A673 (cell line): ENCODE measurements at regions of chr9 and their contacts with region 1.

Region 1: DNA sequence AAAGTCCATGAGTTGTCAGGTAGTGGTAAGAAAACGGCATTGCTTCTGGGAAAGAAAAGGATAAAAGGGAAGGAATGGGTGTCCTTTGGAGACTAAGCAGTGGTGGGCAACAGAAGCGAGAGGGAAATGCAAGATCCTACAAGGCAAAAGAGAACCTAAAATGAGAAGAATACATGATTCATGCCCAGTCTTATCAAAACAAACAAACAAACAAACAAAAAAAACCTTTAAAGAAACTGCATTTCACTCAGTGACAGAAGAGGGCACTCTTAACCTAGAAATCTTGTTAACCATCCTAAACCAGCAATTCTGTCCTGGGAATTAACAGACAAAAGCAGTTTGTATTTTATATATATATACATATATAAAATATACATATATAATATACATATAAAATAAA is 88.5 kb downstream of the SUSD1 start:
- DNase-seq: peak; percentile 32
- H3K4me3 ChIP-seq: no peak overlapping the region
- H3K27ac ChIP-seq: no peak overlapping the region
- H3K4me1 ChIP-seq: no peaks in the 10 kb centered on the region
- H3K27me3 ChIP-seq: no peaks in the 10 kb centered on the region
- CTCF ChIP-seq: peak; percentile 73

Region 2: DNA sequence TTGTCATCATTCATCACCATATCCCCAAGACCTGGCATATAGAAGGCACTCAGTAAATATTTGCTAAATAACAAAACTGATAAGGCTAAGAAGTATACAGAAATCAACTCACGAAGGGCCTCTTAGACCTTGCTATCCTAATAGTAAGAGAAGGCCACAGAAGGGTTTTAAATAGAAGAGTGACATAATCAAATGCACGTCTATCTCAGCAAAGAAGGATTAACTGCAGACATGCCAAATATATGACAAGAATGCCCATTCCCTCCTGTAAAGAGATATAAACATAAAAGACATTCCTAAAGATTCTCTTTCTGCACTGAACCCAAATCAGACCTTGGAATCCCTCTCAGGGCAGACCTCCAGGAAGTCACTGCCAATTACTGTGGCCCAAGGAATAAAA is 636.5 kb before region 1 on chr9:
- CTCF ChIA-PET with region 1: no interaction called
- POLR2A ChIA-PET with region 1: no interaction called
- intact Hi-C with region 1: no loop called
- DNase-seq: no peak
- H3K4me3 ChIP-seq: no peak overlapping the region
- H3K27ac ChIP-seq: no peak overlapping the region
- H3K4me1 ChIP-seq: peaks cover 10% of the 10 kb centered on the region
- H3K27me3 ChIP-seq: no peaks in the 10 kb centered on the region
- CTCF ChIP-seq: no peak

Region 3: DNA sequence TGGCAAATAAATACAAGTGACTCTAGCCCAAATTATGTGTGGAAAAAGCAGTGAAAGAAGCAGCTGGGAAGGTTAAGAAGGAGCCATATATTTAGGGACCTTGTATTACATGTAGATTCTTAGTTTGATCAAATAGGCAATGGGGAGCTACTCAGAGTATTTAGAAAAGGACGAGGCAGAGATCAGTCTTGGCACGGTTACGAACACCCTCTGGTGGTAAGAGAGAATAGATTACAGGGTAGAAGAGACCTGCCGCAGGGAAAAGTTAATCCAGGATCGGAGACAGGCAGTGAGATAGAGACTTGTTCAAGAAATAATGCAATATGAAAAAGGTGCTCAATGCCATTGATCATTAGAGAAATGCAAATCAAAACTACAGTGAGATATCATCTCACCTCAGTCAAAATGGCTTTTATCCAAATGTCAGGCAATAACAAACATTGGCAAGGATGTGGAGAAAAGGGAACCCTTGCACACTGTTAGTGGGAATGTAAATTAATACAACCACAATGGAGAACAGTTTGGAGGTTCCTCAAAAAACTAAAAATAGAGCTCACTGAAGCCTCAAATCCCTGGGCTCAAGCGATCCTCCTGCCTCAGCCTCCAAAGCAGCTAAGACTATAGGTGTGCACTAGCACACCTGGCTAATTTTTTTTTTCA is 619.3 kb after region 1 on chr9:
- CTCF ChIA-PET with region 1: no interaction called
- POLR2A ChIA-PET with region 1: no interaction called
- intact Hi-C with region 1: loop called (anchors 2 kb)
- DNase-seq: peak; percentile 83
- H3K4me3 ChIP-seq: no peak overlapping the region
- H3K27ac ChIP-seq: no peak overlapping the region
- H3K4me1 ChIP-seq: peaks cover 3% of the 10 kb centered on the region
- H3K27me3 ChIP-seq: no peaks in the 10 kb centered on the region
- CTCF ChIP-seq: peak; percentile 68